ENCODE measurements at regions of chr12 and their contacts with region 1.

Region 1: DNA sequence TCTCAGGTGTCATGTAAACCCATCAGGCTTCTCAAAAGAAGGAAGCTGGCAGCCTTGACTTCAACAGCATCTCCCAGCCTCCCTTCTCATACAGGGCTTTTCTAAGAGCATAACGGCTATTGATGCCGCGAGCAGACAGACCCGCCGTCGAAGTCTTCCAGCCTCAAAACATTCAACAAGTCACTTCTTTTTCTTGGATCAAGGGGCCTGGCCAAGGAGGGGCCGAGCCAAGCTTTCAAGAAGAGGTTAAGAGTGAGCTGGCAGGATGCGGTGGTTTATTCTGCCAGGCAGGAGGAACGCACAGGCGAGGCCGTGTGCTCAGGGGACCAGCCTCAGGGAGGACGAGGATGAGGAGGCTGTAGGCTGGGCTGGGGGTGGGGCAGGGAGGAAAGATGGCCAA is 102.9 kb upstream of the RFLNA start:
- DNase-seq: no peak
- H3K4me3 ChIP-seq: no peak overlapping the region
- H3K27ac ChIP-seq: no peak overlapping the region
- H3K4me1 ChIP-seq: no peaks in the 10 kb centered on the region
- H3K27me3 ChIP-seq: no peaks in the 10 kb centered on the region
- CTCF ChIP-seq: no peak
- POLR2A ChIP-seq: no peak

Region 2: GRCh38 chr12:124242529-124243065 is 50.6 kb after region 1 on chr12:
- intact Hi-C with region 1: loop called (anchors 2 kb)
- DNase-seq: no peak
- H3K4me3 ChIP-seq: no peak overlapping the region
- H3K27ac ChIP-seq: no peak overlapping the region
- H3K4me1 ChIP-seq: no peaks in the 10 kb centered on the region
- H3K27me3 ChIP-seq: no peaks in the 10 kb centered on the region
- CTCF ChIP-seq: no peak
- POLR2A ChIP-seq: no peak

Region 3: GRCh38 chr12:124305776-124306685 is 114.1 kb after region 1 on chr12:
- intact Hi-C with region 1: loop called (anchors 2 kb)
- DNase-seq: no peak
- H3K4me3 ChIP-seq: no peak overlapping the region
- H3K27ac ChIP-seq: no peak overlapping the region
- H3K4me1 ChIP-seq: no peaks in the 10 kb centered on the region
- H3K27me3 ChIP-seq: no peaks in the 10 kb centered on the region
- CTCF ChIP-seq: no peak
- POLR2A ChIP-seq: no peak

Measured in breast epithelium (tissue), 4 donors.